Right lobe of liver (tissue), 6 donors: ENCODE measurements at regions of chr1 and their contacts with region 1.

Region 1: DNA sequence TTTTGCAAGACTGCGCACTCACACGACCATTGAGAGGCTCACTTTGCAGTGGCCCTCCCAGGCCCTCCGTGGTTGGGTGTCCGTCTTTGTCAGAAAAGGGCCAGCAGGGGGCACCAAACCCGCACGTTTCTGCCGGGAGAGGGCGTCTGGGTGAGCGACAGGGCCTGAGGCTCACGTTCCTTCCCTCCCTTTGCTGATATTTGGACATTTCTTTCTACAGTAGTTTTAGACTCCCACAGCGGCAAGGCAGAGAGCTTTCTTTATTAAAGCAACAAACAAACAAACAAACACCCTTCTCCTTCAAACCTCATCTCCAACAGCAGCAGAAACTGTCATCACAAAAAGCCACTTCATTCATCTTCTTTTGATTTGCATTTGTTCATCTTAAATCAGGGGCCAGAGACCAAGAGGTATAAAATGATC is 79.2 kb upstream of the WDR26 start:
- DNase-seq: peak; percentile 86 to 92 (median 91)
- ATAC-seq: peak; percentile 85 to 91 (median 90)
- H3K4me3 ChIP-seq: no peak overlapping the region
- H3K27ac ChIP-seq: peak overlapping the region in 2 of 3 donors; percentile 49 to 72
- H3K4me1 ChIP-seq: peaks cover 0 to 42% (median 13%) of the 10 kb centered on the region in 4 donors
- H3K27me3 ChIP-seq: no peaks in the 10 kb centered on the region
- CTCF ChIP-seq: peak; percentile 88 to 93 (median 92)
- POLR2A ChIP-seq: no peak

Region 2: GRCh38 chr1:224644553-224645154 is 130.9 kb after region 1 on chr1:
- intact Hi-C with region 1: loop called in 1 of 2 experiments (anchors 10 kb)
- DNase-seq: peak in 1 of 3 donors; percentile 60
- ATAC-seq: peak; percentile 83 to 94 (median 89)
- H3K4me3 ChIP-seq: no peak overlapping the region
- H3K27ac ChIP-seq: no peak overlapping the region
- H3K4me1 ChIP-seq: no peaks in the 10 kb centered on the region
- H3K27me3 ChIP-seq: no peaks in the 10 kb centered on the region
- CTCF ChIP-seq: peak; percentile 79 to 86 (median 83)
- POLR2A ChIP-seq: no peak

Region 3: GRCh38 chr1:224901087-224901810 is 387.5 kb after region 1 on chr1:
- intact Hi-C with region 1: loop called in 1 of 2 experiments (anchors 10 kb)
- DNase-seq: no peak
- ATAC-seq: no peak
- H3K4me3 ChIP-seq: no peak overlapping the region
- H3K27ac ChIP-seq: no peak overlapping the region
- H3K4me1 ChIP-seq: no peaks in the 10 kb centered on the region
- H3K27me3 ChIP-seq: no peaks in the 10 kb centered on the region
- CTCF ChIP-seq: no peak
- POLR2A ChIP-seq: no peak